MCF 10A (cell line): ENCODE measurements at regions of chr16 and their contacts with region 1.

Region 1: GRCh38 chr16:19583665-19584300 is 28.3 kb downstream of the VPS35L start:
- DNase-seq: peak; percentile 70
- H3K4me3 Mint-ChIP-seq: no peak overlapping the region
- H3K27ac Mint-ChIP-seq: no peak overlapping the region
- H3K4me1 Mint-ChIP-seq: no peaks in the 10 kb centered on the region
- H3K27me3 Mint-ChIP-seq: no peaks in the 10 kb centered on the region
- CTCF ChIP-seq: peak; percentile 93

Region 2: GRCh38 chr16:19307587-19308241 is 276.1 kb before region 1 on chr16:
- CTCF ChIA-PET with region 1: no interaction called
- POLR2A ChIA-PET with region 1: no interaction called
- intact Hi-C with region 1: no loop called
- DNase-seq: peak; percentile 45
- H3K4me3 Mint-ChIP-seq: no peak overlapping the region
- H3K27ac Mint-ChIP-seq: no peak overlapping the region
- H3K4me1 Mint-ChIP-seq: no peaks in the 10 kb centered on the region
- H3K27me3 Mint-ChIP-seq: peaks cover 19% of the 10 kb centered on the region
- CTCF ChIP-seq: no peak

Region 3: GRCh38 chr16:19555162-19555937 is 28.4 kb before region 1 on chr16 and contains the start of gene VPS35L:
- CTCF ChIA-PET with region 1: interaction called, 47 read pairs
- POLR2A ChIA-PET with region 1: no interaction called
- intact Hi-C with region 1: no loop called
- DNase-seq: peak; percentile 96
- H3K4me3 Mint-ChIP-seq: peak within 1 kb of the TSS; percentile 90
- H3K27ac Mint-ChIP-seq: peak within 1 kb of the TSS; percentile 96
- H3K4me1 Mint-ChIP-seq: peaks cover 8% of the 10 kb centered on the region
- H3K27me3 Mint-ChIP-seq: no peaks in the 10 kb centered on the region
- CTCF ChIP-seq: peak; percentile 51
- total RNA-seq, gene VPS35L: 50.2 and 55.5 TPM in 2 replicates

Region 4: GRCh38 chr16:19563377-19563776 is 20.4 kb before region 1 on chr16:
- CTCF ChIA-PET with region 1: interaction called, 52 read pairs
- POLR2A ChIA-PET with region 1: no interaction called
- intact Hi-C with region 1: no loop called
- DNase-seq: no peak
- H3K4me3 Mint-ChIP-seq: no peak overlapping the region
- H3K27ac Mint-ChIP-seq: no peak overlapping the region
- H3K4me1 Mint-ChIP-seq: no peaks in the 10 kb centered on the region
- H3K27me3 Mint-ChIP-seq: no peaks in the 10 kb centered on the region
- CTCF ChIP-seq: no peak

Region 5: GRCh38 chr16:19595043-19595767 is 11.4 kb after region 1 on chr16:
- CTCF ChIA-PET with region 1: interaction called, 85 read pairs
- POLR2A ChIA-PET with region 1: no interaction called
- intact Hi-C with region 1: no loop called
- DNase-seq: peak; percentile 83
- H3K4me3 Mint-ChIP-seq: peak overlapping the region; percentile 40
- H3K27ac Mint-ChIP-seq: no peak overlapping the region
- H3K4me1 Mint-ChIP-seq: peaks cover 14% of the 10 kb centered on the region
- H3K27me3 Mint-ChIP-seq: no peaks in the 10 kb centered on the region
- CTCF ChIP-seq: no peak

Region 6: GRCh38 chr16:19717771-19718602 is 134.2 kb after region 1 on chr16 and contains the starts of genes IQCK and KNOP1:
- CTCF ChIA-PET with region 1: interaction called, 5 read pairs
- POLR2A ChIA-PET with region 1: no interaction called
- intact Hi-C with region 1: loop called (anchors 10 kb)
- DNase-seq: peak; percentile 80
- H3K4me3 Mint-ChIP-seq: peak within 1 kb of the TSS; percentile 87
- H3K27ac Mint-ChIP-seq: peak within 1 kb of the TSS; percentile 65
- H3K4me1 Mint-ChIP-seq: peaks cover 27% of the 10 kb centered on the region
- H3K27me3 Mint-ChIP-seq: no peaks in the 10 kb centered on the region
- CTCF ChIP-seq: no peak
- total RNA-seq, gene IQCK: 5.9 and 8.4 TPM in 2 replicates
- total RNA-seq, gene KNOP1: 22.3 and 24.5 TPM in 2 replicates